GM10248 (cell line): ENCODE measurements at regions of chr11 and their contacts with region 1.

Region 1: DNA sequence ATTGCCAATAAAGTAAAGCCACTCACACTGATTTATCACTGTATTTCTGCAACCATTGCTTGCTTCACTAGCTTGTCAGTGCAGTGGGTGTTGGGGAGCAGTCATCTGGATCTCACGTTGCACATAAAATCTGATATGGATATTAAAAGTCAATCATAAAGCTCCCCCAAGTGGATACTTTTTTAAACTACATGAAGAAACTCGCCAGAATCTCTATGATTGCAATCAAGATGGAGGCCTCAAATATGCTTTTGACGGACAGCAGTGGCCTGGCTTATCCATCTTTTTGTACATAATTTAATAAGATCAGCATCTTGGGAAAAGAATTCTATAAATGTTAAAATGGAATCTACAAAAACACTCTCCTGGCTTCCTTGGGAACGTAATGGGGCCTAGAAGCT is 137.7 kb downstream of the WT1 start:
- DNase-seq: peak; percentile 32
- CTCF ChIP-seq: peak; percentile 21

Region 2: GRCh38 chr11:32273931-32274330 is 23.7 kb before region 1 on chr11:
- CTCF ChIA-PET with region 1: interaction called, 16 read pairs
- POLR2A ChIA-PET with region 1: no interaction called
- DNase-seq: no peak
- CTCF ChIP-seq: no peak